MCF 10A (cell line): ENCODE measurements at regions of chr20 and their contacts with region 1.

Region 1: GRCh38 chr20:56222196-56222595 is 26.3 kb upstream of the MC3R start:
- DNase-seq: peak; percentile 55
- H3K4me3 Mint-ChIP-seq: peak overlapping the region; percentile 50
- H3K27ac Mint-ChIP-seq: peak overlapping the region; percentile 92
- H3K4me1 Mint-ChIP-seq: peaks cover 50% of the 10 kb centered on the region
- H3K27me3 Mint-ChIP-seq: no peaks in the 10 kb centered on the region
- CTCF ChIP-seq: no peak

Region 2: DNA sequence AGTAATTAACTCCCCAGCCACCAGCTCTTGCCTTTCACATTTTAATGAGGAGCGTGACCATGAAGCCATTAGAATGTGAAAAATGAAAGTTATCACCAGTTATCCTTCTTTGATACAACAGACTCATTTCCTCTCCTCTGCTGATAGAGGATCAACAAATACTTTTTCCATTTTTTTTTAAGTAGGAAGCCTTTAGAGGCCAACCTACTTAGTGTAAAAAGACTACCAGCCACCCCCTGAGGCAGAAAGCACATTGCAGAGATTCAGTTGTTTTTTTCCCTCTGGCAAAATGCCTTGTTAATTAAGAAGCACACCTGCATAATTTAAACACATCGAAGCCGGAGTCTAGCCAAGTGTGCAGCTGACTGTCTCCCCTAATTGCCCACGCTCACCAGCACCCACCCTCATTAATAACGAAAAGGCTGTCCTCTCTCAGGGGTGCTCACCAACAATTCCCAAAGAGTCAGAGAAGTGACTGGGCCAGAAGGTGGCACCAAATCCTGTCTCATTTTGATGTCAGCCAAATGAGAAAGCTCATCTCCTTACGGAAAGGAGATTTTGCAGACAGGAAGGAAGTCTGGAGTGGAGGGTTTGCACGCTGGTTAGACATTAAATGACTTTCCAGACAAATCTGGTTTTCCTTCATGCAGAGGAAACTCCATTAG is 34.5 kb before region 1 on chr20:
- CTCF ChIA-PET with region 1: interaction called, 17 read pairs
- POLR2A ChIA-PET with region 1: interaction called, 3 read pairs
- intact Hi-C with region 1: no loop called
- DNase-seq: peak; percentile 62
- H3K4me3 Mint-ChIP-seq: no peak overlapping the region
- H3K27ac Mint-ChIP-seq: no peak overlapping the region
- H3K4me1 Mint-ChIP-seq: peaks cover 6% of the 10 kb centered on the region
- H3K27me3 Mint-ChIP-seq: no peaks in the 10 kb centered on the region
- CTCF ChIP-seq: peak; percentile 48

Region 3: GRCh38 chr20:56257604-56258003 is 35.4 kb after region 1 on chr20:
- CTCF ChIA-PET with region 1: no interaction called
- POLR2A ChIA-PET with region 1: no interaction called
- intact Hi-C with region 1: no loop called
- DNase-seq: no peak
- H3K4me3 Mint-ChIP-seq: no peak overlapping the region
- H3K27ac Mint-ChIP-seq: no peak overlapping the region
- H3K4me1 Mint-ChIP-seq: peaks cover 7% of the 10 kb centered on the region
- H3K27me3 Mint-ChIP-seq: peaks cover 17% of the 10 kb centered on the region
- CTCF ChIP-seq: no peak

Region 4: GRCh38 chr20:56285491-56285890 is 63.3 kb after region 1 on chr20:
- CTCF ChIA-PET with region 1: no interaction called
- POLR2A ChIA-PET with region 1: interaction called, 3 read pairs
- intact Hi-C with region 1: loop called (anchors 2 kb)
- DNase-seq: peak; percentile 84
- H3K4me3 Mint-ChIP-seq: no peak overlapping the region
- H3K27ac Mint-ChIP-seq: peak overlapping the region; percentile 79
- H3K4me1 Mint-ChIP-seq: peaks cover 24% of the 10 kb centered on the region
- H3K27me3 Mint-ChIP-seq: no peaks in the 10 kb centered on the region
- CTCF ChIP-seq: no peak

Region 5: DNA sequence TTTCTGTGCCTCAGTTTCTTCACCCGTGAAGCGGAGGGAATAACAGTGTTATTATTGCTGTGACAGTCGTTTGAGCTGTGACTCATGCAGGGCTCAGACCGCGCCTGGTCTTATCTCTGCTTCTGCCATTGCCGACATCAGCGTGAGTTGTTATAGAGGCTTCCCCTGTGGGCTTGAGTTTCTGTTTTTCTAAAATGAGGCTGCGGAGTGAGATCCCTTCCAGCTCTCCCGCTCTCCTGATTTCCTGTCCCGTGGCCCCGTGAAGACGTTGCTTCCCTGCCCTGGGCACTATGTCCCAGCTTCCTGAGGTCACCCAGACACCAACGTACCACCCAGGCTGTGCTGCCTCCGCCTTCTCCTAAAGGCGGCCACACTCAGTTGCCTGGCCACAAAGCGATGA is 765.8 kb after region 1 on chr20:
- CTCF ChIA-PET with region 1: no interaction called
- POLR2A ChIA-PET with region 1: no interaction called
- intact Hi-C with region 1: no loop called
- DNase-seq: no peak
- H3K4me3 Mint-ChIP-seq: no peak overlapping the region
- H3K27ac Mint-ChIP-seq: no peak overlapping the region
- H3K4me1 Mint-ChIP-seq: peaks cover 8% of the 10 kb centered on the region
- H3K27me3 Mint-ChIP-seq: peaks cover 10% of the 10 kb centered on the region
- CTCF ChIP-seq: no peak

Region 6: GRCh38 chr20:57030611-57031600 is 808.7 kb after region 1 on chr20:
- CTCF ChIA-PET with region 1: no interaction called
- POLR2A ChIA-PET with region 1: no interaction called
- intact Hi-C with region 1: no loop called
- DNase-seq: peak; percentile 51
- H3K4me3 Mint-ChIP-seq: no peak overlapping the region
- H3K27ac Mint-ChIP-seq: no peak overlapping the region
- H3K4me1 Mint-ChIP-seq: no peaks in the 10 kb centered on the region
- H3K27me3 Mint-ChIP-seq: peaks cover 29% of the 10 kb centered on the region
- CTCF ChIP-seq: no peak